ENCODE measurements at regions of chr3 and their contacts with region 1.

Region 1: GRCh38 chr3:32420126-32421038 is 28.7 kb downstream of the CMTM7 start:
- DNase-seq: peak; percentile 74
- H3K4me3 Mint-ChIP-seq: peak overlapping the region; percentile 60
- H3K27ac Mint-ChIP-seq: peak overlapping the region; percentile 87
- H3K4me1 Mint-ChIP-seq: peaks cover 77% of the 10 kb centered on the region
- H3K27me3 Mint-ChIP-seq: no peaks in the 10 kb centered on the region

Region 2: GRCh38 chr3:32432711-32433530 is 12.5 kb after region 1 on chr3:
- intact Hi-C with region 1: loop called (anchors 2 kb)
- DNase-seq: peak; percentile 87
- H3K4me3 Mint-ChIP-seq: peak overlapping the region; percentile 70
- H3K27ac Mint-ChIP-seq: peak overlapping the region; percentile 95
- H3K4me1 Mint-ChIP-seq: peaks cover 73% of the 10 kb centered on the region
- H3K27me3 Mint-ChIP-seq: no peaks in the 10 kb centered on the region